ENCODE measurements at regions of chr1 and their contacts with region 1.

Region 1: DNA sequence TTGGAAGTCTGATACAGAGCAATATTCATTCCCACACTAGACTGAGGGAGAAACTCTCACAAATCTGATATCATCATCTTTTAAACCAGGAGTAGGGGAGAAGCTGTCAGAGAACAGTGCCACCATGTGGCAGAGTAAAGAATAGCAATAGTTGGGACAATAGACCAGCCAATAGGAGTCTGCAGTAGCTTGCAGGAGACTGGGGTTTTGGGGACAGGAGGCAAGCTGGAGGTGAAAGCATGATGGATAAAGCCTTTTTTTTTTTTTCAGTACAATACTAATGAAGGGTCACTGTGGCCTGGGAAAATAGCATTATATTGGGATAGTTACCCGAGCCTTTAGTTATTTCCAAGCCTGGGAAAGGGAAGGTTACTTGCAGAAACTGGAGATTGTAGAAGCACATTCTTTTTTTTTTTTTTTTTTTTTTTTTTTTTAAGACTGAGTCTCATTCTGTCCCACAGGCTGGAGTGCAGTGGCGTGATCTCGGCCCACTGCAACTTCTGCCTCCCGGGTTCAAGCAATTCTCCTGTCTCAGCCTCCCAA is 120.7 kb downstream of the S1PR1 start:
- DNase-seq: peak; percentile 76
- ATAC-seq: peak; percentile 100
- H3K4me3 Mint-ChIP-seq: no peak overlapping the region
- H3K27ac Mint-ChIP-seq: no peak overlapping the region
- H3K4me1 Mint-ChIP-seq: peaks cover 8% of the 10 kb centered on the region
- H3K27me3 Mint-ChIP-seq: no peaks in the 10 kb centered on the region

Region 2: DNA sequence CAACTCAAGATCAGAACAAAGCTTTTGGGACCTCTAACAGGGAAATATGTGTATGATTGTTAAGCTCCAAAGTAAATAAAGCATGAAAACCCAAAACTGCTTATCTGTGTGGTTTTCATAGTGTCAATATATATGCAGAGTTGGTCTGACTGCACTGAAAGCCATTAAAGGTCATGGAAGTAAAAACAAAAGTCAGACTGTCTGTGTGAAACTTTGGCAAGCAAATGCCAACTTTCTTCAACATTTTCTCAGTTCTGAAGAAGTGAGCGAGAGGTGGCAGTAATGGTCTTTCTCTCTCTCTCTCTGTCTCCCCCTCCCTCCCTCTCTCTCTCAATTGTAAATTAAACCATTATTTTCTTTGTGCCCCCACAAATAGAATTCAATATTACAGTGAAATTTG is 220.8 kb before region 1 on chr1:
- CTCF ChIA-PET with region 1: interaction called, 5 read pairs
- POLR2A ChIA-PET with region 1: no interaction called
- intact Hi-C with region 1: loop called (anchors 2 to 5 kb)
- DNase-seq: peak; percentile 45
- ATAC-seq: peak; percentile 85
- H3K4me3 Mint-ChIP-seq: peak overlapping the region; percentile 38
- H3K27ac Mint-ChIP-seq: peak overlapping the region; percentile 91
- H3K4me1 Mint-ChIP-seq: peaks cover 69% of the 10 kb centered on the region
- H3K27me3 Mint-ChIP-seq: no peaks in the 10 kb centered on the region

Region 3: DNA sequence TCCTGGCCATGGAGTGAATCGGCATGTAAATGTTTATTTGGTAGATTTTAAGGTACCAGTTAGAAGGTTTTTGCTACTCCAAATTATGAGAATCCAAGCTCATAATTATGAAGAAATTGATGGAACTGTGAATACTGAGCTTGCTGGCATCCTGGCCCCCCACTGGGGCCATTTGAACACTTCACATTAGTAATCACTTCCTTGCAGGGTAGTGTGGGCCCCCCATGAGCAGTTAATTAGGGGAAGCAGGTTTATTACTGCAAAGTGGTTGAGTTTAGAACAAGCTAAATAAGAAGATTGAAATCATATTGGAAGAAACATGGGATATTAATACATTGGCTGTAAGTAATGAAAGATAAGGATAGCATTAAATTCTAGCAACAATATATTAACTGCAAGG is 34.0 kb before region 1 on chr1:
- CTCF ChIA-PET with region 1: interaction called, 13 read pairs
- POLR2A ChIA-PET with region 1: no interaction called
- intact Hi-C with region 1: no loop called
- DNase-seq: no peak
- ATAC-seq: no peak
- H3K4me3 Mint-ChIP-seq: no peak overlapping the region
- H3K27ac Mint-ChIP-seq: no peak overlapping the region
- H3K4me1 Mint-ChIP-seq: no peaks in the 10 kb centered on the region
- H3K27me3 Mint-ChIP-seq: peaks cover 2% of the 10 kb centered on the region

Region 4: GRCh38 chr1:101346419-101346818 is 11.1 kb before region 1 on chr1:
- CTCF ChIA-PET with region 1: interaction called, 15 read pairs
- POLR2A ChIA-PET with region 1: no interaction called
- intact Hi-C with region 1: no loop called
- DNase-seq: no peak
- ATAC-seq: no peak
- H3K4me3 Mint-ChIP-seq: no peak overlapping the region
- H3K27ac Mint-ChIP-seq: no peak overlapping the region
- H3K4me1 Mint-ChIP-seq: peaks cover 30% of the 10 kb centered on the region
- H3K27me3 Mint-ChIP-seq: no peaks in the 10 kb centered on the region

Region 5: GRCh38 chr1:101376121-101377083 is 18.9 kb after region 1 on chr1:
- CTCF ChIA-PET with region 1: interaction called, 15 read pairs
- POLR2A ChIA-PET with region 1: no interaction called
- intact Hi-C with region 1: no loop called
- DNase-seq: no peak
- ATAC-seq: no peak
- H3K4me3 Mint-ChIP-seq: no peak overlapping the region
- H3K27ac Mint-ChIP-seq: no peak overlapping the region
- H3K4me1 Mint-ChIP-seq: peaks cover 13% of the 10 kb centered on the region
- H3K27me3 Mint-ChIP-seq: peaks cover 6% of the 10 kb centered on the region

Measured in activated CD4-positive, alpha-beta T cell treated with anti-CD3 and anti-CD28 coated beads for 36 hours (primary cell).